CD4-positive, alpha-beta memory T cell (primary cell): ENCODE measurements at regions of chr10 and their contacts with region 1.

Region 1: DNA sequence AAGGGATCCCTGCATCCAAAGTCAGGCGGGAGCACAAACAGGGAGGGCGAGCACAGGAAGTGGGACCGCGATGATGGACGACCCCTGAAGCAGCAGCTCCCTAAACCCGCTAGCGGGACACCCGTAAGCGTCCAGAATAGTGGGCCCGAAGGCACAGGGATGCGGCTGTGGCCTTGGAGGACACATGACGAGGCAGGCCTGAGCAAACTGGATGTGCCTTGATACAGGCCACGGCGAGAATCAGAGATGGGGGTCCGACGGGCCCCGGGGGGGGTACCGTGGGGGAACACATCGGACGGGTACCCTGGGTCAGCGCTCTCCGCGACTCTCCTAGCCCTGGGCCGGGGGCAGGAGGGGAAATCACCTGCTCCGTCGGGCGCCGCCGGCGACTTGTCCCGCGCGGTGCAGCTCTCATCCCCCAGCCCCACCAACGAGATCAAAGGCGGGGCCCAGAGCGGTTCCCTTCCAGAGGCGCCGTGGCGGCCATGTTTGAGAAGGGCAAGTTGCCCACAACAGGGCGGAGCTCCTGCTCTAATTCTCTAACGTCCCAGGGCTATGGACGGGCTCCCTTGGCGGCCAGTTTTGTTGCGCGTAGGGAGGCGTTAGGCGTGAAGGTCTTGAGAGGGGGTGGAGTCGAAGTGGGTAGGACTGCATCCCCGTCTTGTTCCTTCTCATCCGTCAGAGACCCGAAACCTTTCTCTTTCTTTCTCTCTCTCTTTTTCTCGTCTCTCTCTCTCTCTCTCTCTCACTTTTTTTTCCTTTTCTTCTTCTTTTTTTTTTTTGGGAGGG is at the start of gene CUEDC2:
- DNase-seq: peak; percentile 89 to 95 (median 93)
- H3K4me3 ChIP-seq: peak within 1 kb of the TSS; percentile 83 to 92
- H3K4me3 Mint-ChIP-seq: peak within 1 kb of the TSS; percentile 90 to 95 (median 94)
- H3K27ac ChIP-seq: peak within 1 kb of the TSS; percentile 79
- H3K27ac Mint-ChIP-seq: peak within 1 kb of the TSS; percentile 84 to 98 (median 97)
- H3K4me1 ChIP-seq: peaks cover 52% of the 10 kb centered on the region
- H3K4me1 Mint-ChIP-seq: peaks cover 24 to 57% (median 40%) of the 10 kb centered on the region in 4 donors
- H3K27me3 ChIP-seq: no peaks in the 10 kb centered on the region
- H3K27me3 Mint-ChIP-seq: no peaks in the 10 kb centered on the region
- total RNA-seq, gene CUEDC2: 27.2 to 30.8 TPM

Region 2: DNA sequence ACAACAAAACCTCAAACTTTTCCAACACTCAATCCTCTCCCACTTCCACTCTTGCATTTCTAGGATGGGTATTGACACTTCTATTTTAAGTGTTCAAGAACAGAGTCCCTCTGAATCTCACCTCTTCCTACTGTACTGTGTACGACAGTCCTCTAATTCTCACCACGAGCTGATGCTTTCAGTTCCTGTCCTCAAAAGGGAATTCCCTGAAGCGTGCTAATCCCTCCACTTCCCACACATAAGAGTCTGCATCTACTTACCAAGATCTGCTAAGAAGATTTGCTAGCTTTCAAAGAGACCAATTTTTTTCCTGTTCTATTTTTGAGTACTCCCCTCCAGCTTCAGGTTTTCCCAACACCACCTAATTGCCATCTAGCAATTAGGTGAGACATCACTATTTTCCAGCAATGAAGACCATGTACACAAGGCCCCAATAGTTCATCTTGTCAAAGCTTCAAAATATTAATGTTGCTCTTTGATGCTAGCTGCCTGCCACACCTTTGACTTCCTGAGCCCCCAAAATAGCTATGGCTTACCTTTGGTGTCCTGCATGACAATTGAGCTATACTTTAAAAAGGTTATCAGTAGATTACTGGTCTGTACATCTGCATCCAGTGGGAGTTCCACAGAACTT is 430.8 kb before region 1 on chr10:
- CTCF ChIA-PET with region 1: no interaction called
- POLR2A ChIA-PET with region 1: no interaction called
- intact Hi-C with region 1: no loop called
- DNase-seq: no peak
- H3K4me3 ChIP-seq: no peak overlapping the region
- H3K4me3 Mint-ChIP-seq: no peak overlapping the region
- H3K27ac ChIP-seq: no peak overlapping the region
- H3K27ac Mint-ChIP-seq: peak overlapping the region in 6 of 7 donors; percentile 3 to 90 (median 26)
- H3K4me1 ChIP-seq: peaks cover 9% of the 10 kb centered on the region
- H3K4me1 Mint-ChIP-seq: peaks cover 7 to 16% (median 13%) of the 10 kb centered on the region in 4 donors
- H3K27me3 ChIP-seq: no peaks in the 10 kb centered on the region
- H3K27me3 Mint-ChIP-seq: no peaks in the 10 kb centered on the region

Region 3: GRCh38 chr10:102280397-102281101 is 151.8 kb before region 1 on chr10:
- CTCF ChIA-PET with region 1: no interaction called
- POLR2A ChIA-PET with region 1: no interaction called
- intact Hi-C with region 1: no loop called
- DNase-seq: no peak
- H3K4me3 ChIP-seq: no peak overlapping the region
- H3K4me3 Mint-ChIP-seq: peak overlapping the region in 3 of 8 donors; percentile 29 to 69 (median 51)
- H3K27ac ChIP-seq: no peak overlapping the region
- H3K27ac Mint-ChIP-seq: peak overlapping the region in 5 of 7 donors; percentile 42 to 93 (median 60)
- H3K4me1 ChIP-seq: peaks cover 47% of the 10 kb centered on the region
- H3K4me1 Mint-ChIP-seq: peaks cover 44 to 60% (median 51%) of the 10 kb centered on the region in 4 donors
- H3K27me3 ChIP-seq: no peaks in the 10 kb centered on the region
- H3K27me3 Mint-ChIP-seq: no peaks in the 10 kb centered on the region

Region 4: DNA sequence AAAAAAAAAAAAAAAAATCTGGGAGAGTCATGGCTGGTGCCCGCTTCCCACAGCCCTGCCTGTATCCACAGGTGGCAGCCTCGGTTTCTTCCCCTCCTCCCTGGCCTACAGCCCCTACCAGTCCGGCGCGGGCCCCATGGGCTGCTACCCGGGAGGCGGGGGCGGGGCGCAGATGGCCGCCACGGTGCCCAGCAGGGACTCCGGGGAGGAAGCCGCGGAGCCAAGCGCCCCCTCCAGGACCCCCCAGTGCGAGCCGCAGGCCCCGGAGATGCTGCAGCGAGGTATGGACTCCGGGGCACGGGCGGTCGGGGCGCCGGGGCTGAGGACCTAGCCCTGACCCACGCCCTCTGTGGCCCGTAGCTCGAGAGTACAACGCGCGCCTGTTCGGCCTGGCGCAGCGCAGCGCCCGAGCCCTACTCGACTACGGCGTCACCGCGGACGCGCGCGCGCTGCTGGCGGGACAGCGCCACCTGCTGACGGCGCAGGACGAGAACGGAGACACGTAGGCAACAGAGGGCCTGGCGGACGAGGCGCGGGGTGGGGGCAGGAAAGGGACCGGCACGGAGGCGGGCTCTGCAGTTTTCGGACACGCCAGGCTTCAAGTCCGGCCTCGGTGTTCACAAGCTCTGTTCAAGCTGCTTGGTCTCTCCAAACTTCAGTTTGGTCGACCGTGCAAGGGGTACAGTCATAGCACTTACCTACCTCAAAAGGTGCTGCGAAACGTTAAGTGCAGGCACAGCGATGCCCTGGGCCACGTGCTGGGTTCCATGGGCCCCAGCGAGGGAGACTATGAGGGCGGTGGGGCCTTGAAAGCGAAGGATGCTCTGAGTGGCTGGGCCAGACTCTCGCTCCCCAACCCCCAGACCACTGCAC is 32.9 kb before region 1 on chr10:
- CTCF ChIA-PET with region 1: interaction called, 7 read pairs
- POLR2A ChIA-PET with region 1: interaction called, 18 read pairs
- intact Hi-C with region 1: loop called (anchors 1 kb)
- DNase-seq: peak; percentile 86 to 90 (median 87)
- H3K4me3 ChIP-seq: peak overlapping the region in 1 of 2 donors; percentile 49
- H3K4me3 Mint-ChIP-seq: peak overlapping the region; percentile 53 to 81 (median 74)
- H3K27ac ChIP-seq: peak overlapping the region; percentile 100
- H3K27ac Mint-ChIP-seq: peak overlapping the region; percentile 89 to 100 (median 100)
- H3K4me1 ChIP-seq: peaks cover 44% of the 10 kb centered on the region
- H3K4me1 Mint-ChIP-seq: peaks cover 19 to 68% (median 32%) of the 10 kb centered on the region in 4 donors
- H3K27me3 ChIP-seq: no peaks in the 10 kb centered on the region
- H3K27me3 Mint-ChIP-seq: no peaks in the 10 kb centered on the region

Region 5: DNA sequence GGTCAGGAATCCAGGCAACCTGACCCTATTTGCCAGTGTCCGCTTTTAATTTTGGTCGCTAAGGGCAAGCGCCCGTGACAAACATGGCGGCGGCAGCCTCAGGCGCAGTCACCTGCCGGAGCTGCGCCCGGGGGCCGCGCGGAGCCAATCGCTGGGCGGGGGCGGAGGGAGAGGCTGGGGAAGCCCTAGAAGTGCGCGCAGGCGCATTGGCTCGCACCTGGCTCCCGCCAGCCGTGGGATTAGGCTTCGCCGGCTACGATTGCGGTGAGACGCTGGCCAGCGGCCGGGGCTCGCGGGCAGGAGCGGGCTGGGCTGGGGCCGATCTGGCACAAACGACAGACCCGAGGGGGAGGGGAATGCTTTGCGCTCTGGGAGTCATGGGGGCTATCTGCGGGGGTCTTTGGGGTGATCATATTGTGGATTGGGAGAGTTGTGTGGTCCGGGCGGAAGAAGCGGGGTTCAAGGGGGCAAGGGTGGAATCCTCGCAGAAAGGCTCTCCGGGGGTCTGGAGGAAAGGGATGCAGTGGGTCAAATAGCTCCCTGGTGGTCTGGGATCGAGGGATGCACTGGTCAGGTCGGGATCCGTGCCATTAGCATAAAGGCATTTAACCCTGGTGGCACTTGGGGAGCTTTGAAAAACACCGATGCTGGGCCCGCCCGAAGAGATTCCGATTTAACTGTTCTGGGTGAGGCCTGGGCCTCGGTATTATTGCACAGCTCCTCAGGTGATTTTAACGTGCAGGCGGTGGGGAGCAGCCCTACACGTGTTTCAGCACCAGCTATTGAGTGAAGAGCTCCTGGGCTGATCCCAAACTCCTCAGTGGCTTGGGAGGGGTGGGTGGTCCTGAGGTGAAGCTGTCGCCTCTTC is 29.1 kb after region 1 on chr10:
- CTCF ChIA-PET with region 1: interaction called, 4 read pairs
- POLR2A ChIA-PET with region 1: interaction called, 28 read pairs
- intact Hi-C with region 1: loop called (anchors 1 kb)
- DNase-seq: peak; percentile 90 to 91 (median 91)
- H3K4me3 ChIP-seq: peak overlapping the region; percentile 52 to 85
- H3K4me3 Mint-ChIP-seq: peak overlapping the region; percentile 83 to 95 (median 90)
- H3K27ac ChIP-seq: peak overlapping the region; percentile 70
- H3K27ac Mint-ChIP-seq: peak overlapping the region; percentile 75 to 95 (median 87)
- H3K4me1 ChIP-seq: peaks cover 16% of the 10 kb centered on the region
- H3K4me1 Mint-ChIP-seq: peaks cover 16 to 38% (median 23%) of the 10 kb centered on the region in 4 donors
- H3K27me3 ChIP-seq: no peaks in the 10 kb centered on the region
- H3K27me3 Mint-ChIP-seq: no peaks in the 10 kb centered on the region

Region 6: GRCh38 chr10:102621438-102622325 is 189.3 kb after region 1 on chr10:
- CTCF ChIA-PET with region 1: no interaction called
- POLR2A ChIA-PET with region 1: no interaction called
- intact Hi-C with region 1: no loop called
- DNase-seq: no peak
- H3K4me3 ChIP-seq: no peak overlapping the region
- H3K4me3 Mint-ChIP-seq: peak overlapping the region in 3 of 8 donors; percentile 36 to 65 (median 62)
- H3K27ac ChIP-seq: no peak overlapping the region
- H3K27ac Mint-ChIP-seq: peak overlapping the region in 4 of 7 donors; percentile 68 to 77 (median 72)
- H3K4me1 ChIP-seq: peaks cover 15% of the 10 kb centered on the region
- H3K4me1 Mint-ChIP-seq: peaks cover 0 to 12% (median 5%) of the 10 kb centered on the region in 4 donors
- H3K27me3 ChIP-seq: no peaks in the 10 kb centered on the region
- H3K27me3 Mint-ChIP-seq: no peaks in the 10 kb centered on the region

Region 7: GRCh38 chr10:102743588-102744373 is 311.4 kb after region 1 on chr10 and contains the start of gene WBP1L:
- CTCF ChIA-PET with region 1: no interaction called
- POLR2A ChIA-PET with region 1: no interaction called
- intact Hi-C with region 1: loop called (anchors 5 kb)
- DNase-seq: peak; percentile 95 to 98 (median 97)
- H3K4me3 ChIP-seq: peak within 1 kb of the TSS; percentile 79 to 96
- H3K4me3 Mint-ChIP-seq: peak within 1 kb of the TSS; percentile 90 to 99 (median 96)
- H3K27ac ChIP-seq: peak within 1 kb of the TSS; percentile 81
- H3K27ac Mint-ChIP-seq: peak within 1 kb of the TSS; percentile 69 to 99 (median 94)
- H3K4me1 ChIP-seq: peaks cover 35% of the 10 kb centered on the region
- H3K4me1 Mint-ChIP-seq: peaks cover 33 to 50% (median 42%) of the 10 kb centered on the region in 4 donors
- H3K27me3 ChIP-seq: no peaks in the 10 kb centered on the region
- H3K27me3 Mint-ChIP-seq: no peaks in the 10 kb centered on the region
- total RNA-seq, gene WBP1L: 39.3 to 41.1 TPM

Region 8: GRCh38 chr10:102975483-102976379 is 543.4 kb after region 1 on chr10:
- CTCF ChIA-PET with region 1: no interaction called
- POLR2A ChIA-PET with region 1: no interaction called
- intact Hi-C with region 1: no loop called
- DNase-seq: no peak
- H3K4me3 ChIP-seq: no peak overlapping the region
- H3K4me3 Mint-ChIP-seq: no peak overlapping the region
- H3K27ac ChIP-seq: no peak overlapping the region
- H3K27ac Mint-ChIP-seq: no peak overlapping the region
- H3K4me1 ChIP-seq: no peaks in the 10 kb centered on the region
- H3K4me1 Mint-ChIP-seq: peaks cover 0 to 18% (median 8%) of the 10 kb centered on the region in 4 donors
- H3K27me3 ChIP-seq: no peaks in the 10 kb centered on the region
- H3K27me3 Mint-ChIP-seq: no peaks in the 10 kb centered on the region